GM13977 (cell line): ENCODE measurements at regions of chr3 and their contacts with region 1.

Region 1: DNA sequence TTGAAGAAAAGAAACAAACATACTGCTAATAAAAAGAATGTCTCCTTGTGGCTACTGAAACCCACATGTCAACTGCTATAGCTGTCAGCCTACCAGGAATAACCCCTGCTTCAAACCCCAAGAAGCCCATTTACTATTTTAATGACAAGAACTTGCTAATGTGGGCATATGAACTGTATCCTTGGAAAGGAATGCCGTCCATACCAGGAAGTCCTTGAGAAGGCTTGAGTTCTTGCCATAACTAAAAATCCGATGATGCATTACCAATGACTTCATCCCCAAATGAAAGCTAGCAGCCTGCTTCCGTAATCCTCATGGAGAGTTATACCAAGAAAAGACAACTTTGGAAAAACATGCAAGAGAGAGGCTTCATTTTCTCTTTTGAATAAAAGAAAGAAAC is 34.8 kb downstream of the MINDY4B start:
- DNase-seq: no peak
- CTCF ChIP-seq: no peak

Region 2: GRCh38 chr3:150462108-150462507 is 408.3 kb before region 1 on chr3:
- in situ Hi-C with region 1: no loop called
- DNase-seq: no peak
- CTCF ChIP-seq: no peak

Region 3: DNA sequence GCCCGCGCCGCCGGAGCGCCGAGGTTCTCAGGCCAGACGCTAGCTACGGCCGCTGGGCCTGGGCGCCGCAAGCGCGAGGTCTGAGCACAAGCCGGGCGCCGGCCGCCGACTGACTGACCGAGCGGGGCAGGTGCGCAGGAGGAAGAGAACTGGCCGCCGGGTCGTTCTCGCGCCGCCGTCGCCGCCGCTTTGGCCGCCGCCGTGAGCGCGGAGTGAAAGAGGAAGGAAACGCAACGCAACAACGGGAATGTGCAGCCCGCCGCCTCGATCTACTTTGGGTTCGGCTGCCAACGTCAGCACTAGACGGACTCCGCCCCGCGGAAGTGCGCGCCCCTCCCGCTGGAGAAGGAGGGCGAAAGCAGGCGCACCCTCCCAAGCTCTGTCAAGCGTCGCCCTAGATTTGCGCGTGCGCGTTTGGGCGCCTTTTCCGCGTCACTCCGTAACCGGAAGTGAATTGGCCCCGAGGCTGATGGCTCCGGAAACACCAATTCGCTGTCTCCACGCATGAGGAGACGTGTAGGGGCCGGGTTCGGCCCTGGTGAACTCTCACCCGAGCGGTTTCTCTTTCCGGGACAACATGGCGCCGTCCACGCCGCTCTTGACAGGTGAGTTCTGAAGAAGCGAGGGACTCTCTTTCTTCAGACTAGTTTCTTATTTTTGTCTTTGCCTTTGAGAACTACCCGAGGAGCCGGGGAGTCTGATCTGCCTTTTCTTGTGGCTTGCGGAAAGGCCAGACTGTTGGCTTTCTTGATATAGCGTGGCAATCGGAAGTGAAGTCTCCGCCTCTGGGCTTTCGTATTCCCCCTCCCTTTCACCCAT is 324.0 kb before region 1 on chr3 and contains the starts of genes EIF2A and SERP1:
- in situ Hi-C with region 1: loop called (anchors 25 kb)
- DNase-seq: peak; percentile 95
- CTCF ChIP-seq: no peak

Region 4: GRCh38 chr3:150737874-150738713 is 132.3 kb before region 1 on chr3:
- in situ Hi-C with region 1: loop called (anchors 10 kb)
- DNase-seq: no peak
- CTCF ChIP-seq: no peak